ENCODE measurements at regions of chr5 and their contacts with region 1.

Region 1: GRCh38 chr5:80255732-80256479 is at the start of gene SERINC5:
- DNase-seq: peak; percentile 79
- H3K4me3 Mint-ChIP-seq: peak within 1 kb of the TSS; percentile 92
- H3K27ac Mint-ChIP-seq: peak within 1 kb of the TSS; percentile 88
- H3K4me1 Mint-ChIP-seq: peaks cover 26% of the 10 kb centered on the region
- H3K27me3 Mint-ChIP-seq: no peaks in the 10 kb centered on the region
- CTCF ChIP-seq: no peak
- total RNA-seq, gene SERINC5: 17.1 and 17.2 TPM in 2 replicates

Region 2: GRCh38 chr5:80181618-80182211 is 74.2 kb before region 1 on chr5:
- CTCF ChIA-PET with region 1: interaction called, 4 read pairs
- POLR2A ChIA-PET with region 1: interaction called, 17 read pairs
- intact Hi-C with region 1: loop called (anchors 1 kb)
- DNase-seq: peak; percentile 69
- H3K4me3 Mint-ChIP-seq: no peak overlapping the region
- H3K27ac Mint-ChIP-seq: no peak overlapping the region
- H3K4me1 Mint-ChIP-seq: peaks cover 22% of the 10 kb centered on the region
- H3K27me3 Mint-ChIP-seq: no peaks in the 10 kb centered on the region
- CTCF ChIP-seq: no peak

Region 3: DNA sequence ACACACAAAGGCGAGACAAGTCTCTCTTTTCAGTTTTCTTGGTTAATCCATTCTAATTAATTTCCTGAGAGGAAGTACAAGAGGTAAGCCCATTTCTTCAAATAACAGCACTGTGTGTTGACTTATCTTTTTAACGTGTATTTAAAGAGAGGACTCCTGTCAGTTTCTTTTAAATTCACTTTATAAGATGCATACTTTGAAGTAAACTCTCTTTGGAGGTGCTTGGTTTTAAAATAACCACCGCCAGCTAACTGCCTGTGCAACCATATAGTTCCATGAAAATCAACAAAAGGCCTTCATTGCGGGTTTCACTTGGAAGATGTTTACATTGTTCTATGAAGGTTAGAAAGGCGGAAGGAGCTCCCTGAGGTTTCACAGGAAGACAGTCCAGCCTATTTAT is 13.0 kb after region 1 on chr5:
- CTCF ChIA-PET with region 1: interaction called, 3 read pairs
- POLR2A ChIA-PET with region 1: interaction called, 18 read pairs
- intact Hi-C with region 1: no loop called
- DNase-seq: no peak
- H3K4me3 Mint-ChIP-seq: no peak overlapping the region
- H3K27ac Mint-ChIP-seq: no peak overlapping the region
- H3K4me1 Mint-ChIP-seq: no peaks in the 10 kb centered on the region
- H3K27me3 Mint-ChIP-seq: no peaks in the 10 kb centered on the region
- CTCF ChIP-seq: no peak

Region 4: DNA sequence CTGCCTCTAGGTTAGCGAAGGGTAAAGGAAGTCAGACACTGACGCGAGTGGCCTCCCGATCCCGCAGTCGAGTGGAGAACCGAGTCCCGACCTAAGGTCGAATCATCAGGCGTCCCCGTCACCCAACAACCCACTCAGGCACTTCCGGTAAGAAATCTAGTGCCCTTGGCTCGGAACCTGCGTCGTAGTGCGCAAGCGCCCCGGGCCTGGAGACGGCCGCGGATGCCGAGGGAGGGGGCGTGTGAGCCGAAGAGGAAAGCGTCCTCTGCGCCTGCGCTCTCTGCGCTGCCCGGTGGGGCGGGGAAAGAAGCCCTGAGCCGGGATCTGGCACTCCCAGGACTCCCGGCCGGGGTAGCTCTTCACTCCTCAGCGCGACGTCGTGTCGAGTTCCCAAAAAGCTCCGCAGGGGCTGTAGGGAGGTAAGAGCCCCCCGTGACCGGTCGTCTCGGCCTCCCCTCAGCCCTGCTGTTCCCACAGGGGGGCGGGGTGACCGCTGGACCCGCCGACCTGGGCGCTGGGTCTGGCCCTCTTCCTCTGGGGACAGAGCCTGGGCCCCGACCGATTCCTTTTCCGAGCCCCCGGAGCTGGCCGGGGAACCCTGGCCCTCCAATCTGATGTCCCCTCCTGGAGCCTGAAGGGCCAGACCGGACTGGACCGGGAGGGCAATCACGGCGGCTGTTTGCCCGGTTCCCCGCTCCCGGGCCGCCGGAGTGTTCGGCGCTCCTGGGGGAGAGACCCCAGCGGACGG is 152.0 kb after region 1 on chr5 and contains the start of gene ZFYVE16:
- CTCF ChIA-PET with region 1: no interaction called
- POLR2A ChIA-PET with region 1: interaction called, 23 read pairs
- intact Hi-C with region 1: no loop called
- DNase-seq: peak; percentile 97
- H3K4me3 Mint-ChIP-seq: peak within 1 kb of the TSS; percentile 80
- H3K27ac Mint-ChIP-seq: peak within 1 kb of the TSS; percentile 98
- H3K4me1 Mint-ChIP-seq: peaks cover 19% of the 10 kb centered on the region
- H3K27me3 Mint-ChIP-seq: no peaks in the 10 kb centered on the region
- CTCF ChIP-seq: peak; percentile 38
- total RNA-seq, gene ZFYVE16: 34.8 and 36.9 TPM in 2 replicates